ENCODE measurements at regions of chr4 and their contacts with region 1.

Region 1: GRCh38 chr4:174222266-174222872 is 61.1 kb downstream of the FBXO8 start:
- DNase-seq: no peak
- ATAC-seq: no peak
- H3K4me3 ChIP-seq: no peak overlapping the region
- H3K27ac ChIP-seq: no peak overlapping the region
- H3K4me1 ChIP-seq: no peaks in the 10 kb centered on the region
- H3K27me3 ChIP-seq: no peaks in the 10 kb centered on the region

Region 2: DNA sequence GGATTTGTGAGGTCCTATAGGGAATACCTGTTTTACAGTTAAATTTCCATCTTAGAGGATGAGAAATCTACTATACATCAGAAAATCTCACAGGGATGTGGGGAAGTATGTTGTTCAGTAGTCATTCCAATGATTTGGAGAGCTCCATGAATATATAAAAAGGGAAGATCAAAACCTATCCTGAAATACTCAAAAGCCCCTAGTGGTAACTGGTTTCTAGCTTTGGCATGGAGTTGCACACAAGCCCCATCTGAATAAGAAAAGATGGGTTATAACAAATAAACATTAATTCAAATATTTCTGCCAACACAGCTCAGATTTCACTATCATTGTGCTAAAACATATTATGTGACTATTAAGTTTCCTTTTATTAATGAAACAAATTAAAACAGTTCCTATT is 40.5 kb before region 1 on chr4:
- intact Hi-C with region 1: loop called in 1 of 4 experiments (anchors 2 kb)
- DNase-seq: no peak
- ATAC-seq: no peak
- H3K4me3 ChIP-seq: no peak overlapping the region
- H3K27ac ChIP-seq: no peak overlapping the region
- H3K4me1 ChIP-seq: no peaks in the 10 kb centered on the region
- H3K27me3 ChIP-seq: no peaks in the 10 kb centered on the region

Region 3: DNA sequence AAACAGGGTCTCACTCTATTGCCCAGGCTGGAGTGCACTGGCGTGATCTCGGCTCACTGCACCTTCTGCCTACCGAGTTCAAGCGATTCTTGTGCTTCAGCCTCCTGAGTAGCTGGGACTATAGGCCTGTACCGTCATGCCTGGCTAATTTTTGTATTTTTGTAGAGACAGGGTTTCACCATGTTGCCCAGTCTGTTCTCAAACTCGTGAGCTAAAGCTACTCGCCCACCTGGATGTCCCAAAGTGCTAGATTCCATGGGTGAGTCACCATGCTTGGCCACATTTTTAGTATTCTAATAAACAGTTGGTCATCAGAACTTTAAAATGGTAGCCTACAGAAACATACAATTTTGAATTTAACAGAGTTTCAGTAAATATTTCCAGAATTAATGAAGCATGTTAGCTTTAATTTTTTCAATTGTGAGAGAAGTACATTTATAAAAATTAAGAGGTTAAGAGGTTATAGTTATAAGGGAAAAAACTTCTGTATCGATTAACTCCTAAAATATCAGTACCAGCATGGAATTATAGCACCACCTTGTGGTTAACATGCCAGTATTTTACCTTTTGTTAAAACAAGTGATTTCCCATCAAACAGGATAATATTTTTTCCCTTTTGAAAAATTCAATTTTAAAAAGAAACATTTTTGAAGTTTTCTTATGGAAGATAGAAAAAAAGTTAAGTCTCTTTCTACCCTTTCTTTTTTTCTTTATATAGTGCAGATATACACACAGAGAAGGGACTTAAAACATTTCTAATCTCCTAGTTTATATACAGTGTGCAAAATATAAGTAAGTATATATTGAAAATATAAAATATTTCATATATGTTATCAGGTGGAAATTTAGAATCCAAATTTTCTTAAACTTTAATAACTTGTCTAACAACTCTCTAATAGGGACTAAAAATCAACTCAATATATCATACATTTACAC is 96.7 kb after region 1 on chr4:
- intact Hi-C with region 1: loop called in 1 of 4 experiments (anchors 5 kb)
- DNase-seq: no peak
- ATAC-seq: no peak
- H3K4me3 ChIP-seq: no peak overlapping the region
- H3K27ac ChIP-seq: no peak overlapping the region
- H3K4me1 ChIP-seq: no peaks in the 10 kb centered on the region
- H3K27me3 ChIP-seq: no peaks in the 10 kb centered on the region